Mammary epithelial cell (primary cell): ENCODE measurements at regions of chr3 and their contacts with region 1.

Region 1: DNA sequence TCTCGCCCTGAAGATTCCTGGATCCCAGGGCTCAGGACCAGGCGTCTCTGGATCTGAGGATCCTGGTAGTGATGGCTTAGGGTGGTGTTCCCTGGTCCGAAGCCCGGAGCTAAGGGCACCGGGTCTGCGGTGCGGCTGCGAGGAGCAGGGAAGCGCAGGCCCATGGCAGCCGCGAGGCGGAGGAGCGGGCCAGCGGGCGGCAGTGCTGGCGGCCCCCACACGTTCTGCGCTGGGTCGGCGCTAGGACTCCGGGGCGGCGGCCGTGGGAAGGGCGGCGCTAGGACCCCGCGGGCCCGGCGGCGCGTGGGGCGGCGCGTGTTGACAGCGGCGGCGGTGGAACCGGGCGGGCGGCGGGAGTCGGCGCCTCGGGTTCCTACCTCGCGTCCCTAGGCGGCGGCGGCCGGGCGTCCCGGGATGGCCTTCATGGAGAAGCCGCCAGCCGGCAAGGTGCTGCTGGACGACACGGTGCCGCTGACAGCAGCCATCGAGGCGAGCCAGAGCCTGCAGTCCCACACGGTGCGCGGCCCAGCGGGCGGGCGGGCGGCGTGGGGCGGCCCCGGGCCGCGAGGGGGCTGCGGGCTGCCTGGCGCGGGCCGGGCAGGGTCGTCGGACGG is at the start of gene PXK:
- DNase-seq: peak; percentile 75
- H3K4me3 ChIP-seq: peak within 1 kb of the TSS; percentile 79 to 85 (median 84)
- H3K27ac ChIP-seq: no peak within 1 kb of the TSS
- H3K4me1 ChIP-seq: peaks cover 34% of the 10 kb centered on the region
- H3K27me3 ChIP-seq: no peaks in the 10 kb centered on the region
- CTCF ChIP-seq: peak in 1 of 2 donors; percentile 5
- total RNA-seq, gene PXK: 39.6 to 42.2 TPM

Region 2: GRCh38 chr3:58383904-58384303 is 51.2 kb after region 1 on chr3:
- CTCF ChIA-PET with region 1: no interaction called
- dilution Hi-C with region 1: loop called (anchors 5 kb)
- in situ Hi-C with region 1: no loop called
- intact Hi-C with region 1: loop called (anchors 1 kb)
- DNase-seq: peak; percentile 100
- H3K4me3 ChIP-seq: no peak overlapping the region
- H3K27ac ChIP-seq: peak overlapping the region; percentile 72
- H3K4me1 ChIP-seq: peaks cover 23% of the 10 kb centered on the region
- H3K27me3 ChIP-seq: no peaks in the 10 kb centered on the region
- CTCF ChIP-seq: no peak

Region 3: DNA sequence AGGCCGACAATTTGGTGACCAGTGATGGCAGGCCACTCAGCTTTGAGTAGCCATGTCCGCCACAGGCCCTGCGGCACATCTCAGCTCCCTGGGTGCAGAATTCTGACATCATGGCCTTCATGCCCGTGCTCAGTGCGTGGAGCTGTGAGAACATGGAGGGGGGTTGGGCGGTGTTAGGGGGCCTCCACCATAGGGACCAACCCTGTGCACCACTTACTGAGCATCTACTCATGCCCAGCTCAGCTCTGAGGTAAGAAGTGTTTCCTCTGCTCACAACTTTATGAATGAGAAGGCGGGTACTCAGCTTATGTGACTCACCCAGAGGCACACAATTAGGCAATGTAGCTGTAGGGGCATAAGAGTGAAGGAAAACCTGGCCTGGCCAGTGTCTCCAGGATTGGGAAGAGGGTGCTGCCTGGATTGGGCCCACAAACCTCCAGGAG is 193.9 kb after region 1 on chr3:
- CTCF ChIA-PET with region 1: no interaction called
- dilution Hi-C with region 1: no loop called
- in situ Hi-C with region 1: loop called (anchors 10 kb)
- intact Hi-C with region 1: loop called (anchors 5 kb)
- DNase-seq: peak; percentile 92
- H3K4me3 ChIP-seq: no peak overlapping the region
- H3K27ac ChIP-seq: no peak overlapping the region
- H3K4me1 ChIP-seq: peaks cover 26% of the 10 kb centered on the region
- H3K27me3 ChIP-seq: no peaks in the 10 kb centered on the region
- CTCF ChIP-seq: no peak